PC-3 (cell line): ENCODE measurements at regions of chr3 and their contacts with region 1.

Region 1: GRCh38 chr3:188947401-188948280 is 224.1 kb upstream of the TPRG1 start:
- DNase-seq: peak; percentile 95
- ATAC-seq: peak; percentile 75
- H3K4me3 ChIP-seq: peak overlapping the region; percentile 67
- H3K27ac ChIP-seq: peak overlapping the region; percentile 94
- H3K4me1 ChIP-seq: peaks cover 45% of the 10 kb centered on the region
- H3K27me3 ChIP-seq: no peaks in the 10 kb centered on the region
- CTCF ChIP-seq: peak; percentile 56; the same call in 1 of the 2 replicates

Region 2: DNA sequence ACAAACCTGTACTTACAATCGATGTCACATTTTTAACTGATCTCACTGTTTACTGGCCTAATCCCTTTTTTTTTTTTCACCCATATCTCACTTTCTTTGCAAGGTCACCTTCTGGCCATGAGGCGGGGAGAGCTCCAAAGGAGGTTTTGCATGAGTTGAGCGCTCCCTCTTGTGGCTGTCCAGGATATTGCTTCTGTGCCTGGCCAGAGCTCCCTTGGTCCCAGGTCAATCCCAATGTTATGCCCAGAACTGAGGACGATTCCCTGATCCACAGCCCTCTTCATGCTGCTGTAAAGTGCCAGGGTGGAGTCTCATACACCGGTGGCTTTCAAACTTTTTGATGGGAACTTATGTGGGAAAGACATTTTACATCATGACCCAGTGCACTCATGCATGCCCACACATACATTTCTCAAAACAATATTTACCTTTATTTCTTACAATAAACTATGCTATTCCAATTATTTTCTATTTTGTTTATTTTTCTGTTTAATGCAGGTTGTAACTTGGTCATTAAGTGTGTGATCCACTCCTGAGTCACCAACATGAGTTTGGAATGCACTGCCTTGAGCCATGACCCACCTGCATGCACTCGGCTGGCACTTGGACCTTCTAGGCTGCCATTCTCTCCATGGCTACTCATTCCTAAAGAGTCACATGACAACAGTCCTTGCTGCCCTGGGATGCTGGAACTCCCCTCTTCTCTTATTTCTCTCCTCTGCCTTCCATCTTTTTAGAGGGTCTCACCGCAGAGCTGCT is 1267.8 kb before region 1 on chr3:
- CTCF ChIA-PET with region 1: interaction called, 21 read pairs
- POLR2A ChIA-PET with region 1: no interaction called
- intact Hi-C with region 1: no loop called
- DNase-seq: peak; percentile 87
- ATAC-seq: peak; percentile 87
- H3K4me3 ChIP-seq: no peak overlapping the region
- H3K27ac ChIP-seq: no peak overlapping the region
- H3K4me1 ChIP-seq: no peaks in the 10 kb centered on the region
- H3K27me3 ChIP-seq: peaks cover 41% of the 10 kb centered on the region
- CTCF ChIP-seq: peak; percentile 92

Region 3: DNA sequence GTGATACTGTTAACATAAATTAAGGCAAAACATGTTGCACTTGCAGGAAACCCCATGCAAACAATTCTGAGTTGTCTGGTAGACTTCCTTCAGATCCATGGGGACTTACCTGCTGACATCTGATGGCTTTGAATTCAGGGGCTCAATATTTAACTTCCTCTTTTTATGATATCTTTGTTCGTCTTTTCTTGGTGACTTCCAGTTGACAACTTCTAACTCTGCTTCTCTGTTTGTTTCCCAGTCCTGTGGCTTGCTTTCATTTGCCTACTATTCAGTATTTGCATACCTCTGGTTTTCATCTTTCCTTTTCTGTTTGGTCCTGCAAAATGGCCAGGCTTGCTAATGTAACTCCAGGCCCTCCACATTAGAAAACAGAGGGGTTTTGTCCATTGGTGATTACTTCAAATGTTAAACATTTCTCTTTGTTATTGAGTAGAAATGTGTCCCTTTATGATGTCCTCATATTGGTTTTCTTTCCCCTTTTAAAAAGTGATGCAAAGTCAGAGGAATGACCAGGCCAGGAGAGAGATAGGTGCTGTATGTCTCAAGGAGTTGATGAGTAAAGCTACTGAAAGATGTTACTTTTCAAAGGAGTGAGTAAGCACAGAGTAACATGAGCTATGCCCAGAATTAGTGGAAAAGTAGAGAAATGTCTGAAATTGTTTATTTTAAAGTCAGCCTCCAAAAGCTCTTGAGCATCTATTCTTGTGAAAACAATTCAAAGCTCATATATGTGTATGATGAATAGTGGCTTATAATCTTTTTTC is 457.8 kb before region 1 on chr3:
- CTCF ChIA-PET with region 1: no interaction called
- POLR2A ChIA-PET with region 1: interaction called, 3 read pairs
- intact Hi-C with region 1: loop called (anchors 1 kb)
- DNase-seq: no peak
- ATAC-seq: peak; percentile 10; the same call in 1 of the 2 replicates
- H3K4me3 ChIP-seq: no peak overlapping the region
- H3K27ac ChIP-seq: no peak overlapping the region
- H3K4me1 ChIP-seq: peaks cover 21% of the 10 kb centered on the region
- H3K27me3 ChIP-seq: no peaks in the 10 kb centered on the region
- CTCF ChIP-seq: no peak

Region 4: DNA sequence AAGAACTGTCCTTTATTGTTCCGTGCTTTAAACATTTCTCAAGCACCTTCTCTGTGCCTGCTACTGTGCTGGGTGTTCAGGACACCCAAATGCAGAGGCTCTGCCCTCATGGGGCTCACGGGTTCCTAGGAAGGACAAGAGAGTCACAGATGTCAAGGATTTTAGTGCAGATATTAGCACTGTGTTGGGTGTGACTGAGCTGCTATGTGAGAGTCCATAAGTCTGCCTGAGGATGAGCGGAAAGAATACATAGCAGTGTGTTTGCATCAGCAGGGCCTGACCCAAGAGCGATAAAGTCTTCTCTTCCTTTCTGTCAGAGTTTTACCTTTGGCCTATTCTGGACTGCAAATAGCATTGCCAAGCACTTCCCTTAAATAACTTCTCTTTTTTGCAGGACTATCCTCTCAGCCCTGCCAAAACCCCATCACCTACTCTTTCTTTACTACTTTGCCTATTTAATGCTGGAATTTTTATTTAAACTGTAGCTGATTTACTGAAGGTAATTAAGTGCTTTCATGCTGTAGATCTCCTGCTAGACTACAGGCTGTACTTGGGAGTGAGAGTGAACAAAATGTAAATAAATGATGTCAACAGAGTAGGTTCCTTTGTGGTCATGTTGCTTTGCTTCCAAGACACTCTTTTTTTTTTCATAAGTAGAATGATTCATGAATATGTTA is 235.3 kb before region 1 on chr3:
- CTCF ChIA-PET with region 1: no interaction called
- POLR2A ChIA-PET with region 1: no interaction called
- intact Hi-C with region 1: loop called (anchors 2 kb)
- DNase-seq: peak; percentile 77
- ATAC-seq: peak; percentile 92
- H3K4me3 ChIP-seq: peak overlapping the region; percentile 7; the same call in 1 of the 2 replicates
- H3K27ac ChIP-seq: peak overlapping the region; percentile 72
- H3K4me1 ChIP-seq: peaks cover 40% of the 10 kb centered on the region
- H3K27me3 ChIP-seq: no peaks in the 10 kb centered on the region
- CTCF ChIP-seq: no peak

Region 5: GRCh38 chr3:188830893-188831292 is 116.7 kb before region 1 on chr3:
- CTCF ChIA-PET with region 1: no interaction called
- POLR2A ChIA-PET with region 1: no interaction called
- intact Hi-C with region 1: loop called (anchors 5 kb)
- DNase-seq: peak; percentile 44
- ATAC-seq: no peak
- H3K4me3 ChIP-seq: no peak overlapping the region
- H3K27ac ChIP-seq: no peak overlapping the region
- H3K4me1 ChIP-seq: no peaks in the 10 kb centered on the region
- H3K27me3 ChIP-seq: no peaks in the 10 kb centered on the region
- CTCF ChIP-seq: peak; percentile 66

Region 6: DNA sequence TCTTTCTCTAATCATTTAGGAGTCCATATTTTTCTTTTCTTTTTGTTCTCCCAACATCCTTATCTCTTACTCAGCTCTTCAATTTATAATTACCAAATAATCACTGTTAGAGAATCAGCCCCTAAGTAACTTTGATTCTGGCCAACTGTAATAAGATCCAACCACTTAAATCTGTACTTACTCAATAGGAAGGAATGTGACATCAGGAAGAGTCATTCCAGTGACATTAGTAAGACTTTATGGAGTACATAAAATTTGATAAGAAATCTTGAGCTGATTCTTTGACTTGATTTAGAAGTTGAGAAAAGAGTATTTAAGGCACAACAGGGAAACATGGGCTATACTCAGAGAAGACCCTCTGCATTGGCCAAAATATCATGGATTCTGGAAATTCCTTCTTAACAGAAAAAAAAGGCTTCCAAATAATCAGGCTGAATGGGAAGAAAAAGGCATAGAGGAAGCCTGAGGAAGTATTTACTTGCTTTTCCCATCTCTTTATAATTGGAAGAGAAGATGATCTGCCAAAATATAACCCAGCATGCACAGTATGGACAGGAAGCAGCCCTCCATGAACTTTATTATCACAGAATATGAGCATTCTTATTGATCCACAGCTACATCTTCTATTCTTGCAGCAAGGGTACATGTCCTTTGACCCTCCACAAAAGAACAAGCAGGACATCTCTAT is 65.5 kb before region 1 on chr3:
- CTCF ChIA-PET with region 1: no interaction called
- POLR2A ChIA-PET with region 1: interaction called, 3 read pairs
- intact Hi-C with region 1: loop called (anchors 1 kb)
- DNase-seq: peak; percentile 90
- ATAC-seq: peak; percentile 89
- H3K4me3 ChIP-seq: peak overlapping the region; percentile 18; the same call in 1 of the 2 replicates
- H3K27ac ChIP-seq: peak overlapping the region; percentile 62
- H3K4me1 ChIP-seq: peaks cover 28% of the 10 kb centered on the region
- H3K27me3 ChIP-seq: no peaks in the 10 kb centered on the region
- CTCF ChIP-seq: no peak

Region 7: GRCh38 chr3:188900421-188900951 is 47.2 kb before region 1 on chr3:
- CTCF ChIA-PET with region 1: no interaction called
- POLR2A ChIA-PET with region 1: interaction called, 4 read pairs
- intact Hi-C with region 1: loop called (anchors 5 kb)
- DNase-seq: peak; percentile 82
- ATAC-seq: peak; percentile 87
- H3K4me3 ChIP-seq: no peak overlapping the region
- H3K27ac ChIP-seq: peak overlapping the region; percentile 25
- H3K4me1 ChIP-seq: peaks cover 21% of the 10 kb centered on the region
- H3K27me3 ChIP-seq: no peaks in the 10 kb centered on the region
- CTCF ChIP-seq: no peak

Region 8: DNA sequence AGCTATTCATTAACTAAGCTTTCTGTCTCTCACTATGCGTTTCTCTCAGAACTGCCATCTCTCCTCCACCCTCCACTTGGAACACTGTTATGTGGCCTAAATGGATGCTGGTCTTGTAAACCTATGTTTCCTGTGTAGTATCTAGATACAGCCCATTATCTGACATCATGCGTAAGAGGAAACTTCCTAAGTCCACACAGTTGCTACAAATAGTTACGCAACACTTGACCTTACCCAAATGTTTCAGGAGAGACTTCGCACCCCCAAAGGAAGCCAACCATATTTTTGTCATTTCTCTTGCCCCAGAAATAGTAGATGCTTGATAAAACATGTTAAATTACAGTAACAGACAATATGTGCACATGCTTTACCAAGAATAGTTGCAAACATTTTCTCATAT is 137.0 kb after region 1 on chr3:
- CTCF ChIA-PET with region 1: no interaction called
- POLR2A ChIA-PET with region 1: no interaction called
- intact Hi-C with region 1: no loop called
- DNase-seq: no peak
- ATAC-seq: no peak
- H3K4me3 ChIP-seq: no peak overlapping the region
- H3K27ac ChIP-seq: no peak overlapping the region
- H3K4me1 ChIP-seq: no peaks in the 10 kb centered on the region
- H3K27me3 ChIP-seq: peaks cover 10% of the 10 kb centered on the region; the same call in 1 of the 2 replicates
- CTCF ChIP-seq: no peak